Activated CD4-positive, alpha-beta T cell treated with anti-CD3 and anti-CD28 coated beads, Interleukin-2, amount 10 ng/mL, durations not matched to agents 24 days and 14 days (primary cell): ENCODE measurements at regions of chr1 and their contacts with region 1.

Region 1: GRCh38 chr1:52141513-52142219 is at the start of gene ZFYVE9:
- DNase-seq: peak; percentile 92
- H3K4me3 Mint-ChIP-seq: peak within 1 kb of the TSS; percentile 81
- H3K27ac Mint-ChIP-seq: peak within 1 kb of the TSS; percentile 74
- H3K4me1 Mint-ChIP-seq: peaks cover 22% of the 10 kb centered on the region
- H3K27me3 Mint-ChIP-seq: peaks cover 33% of the 10 kb centered on the region
- total RNA-seq, gene ZFYVE9: 3.9 and 4.3 TPM in 2 replicates

Region 2: GRCh38 chr1:51946300-51946699 is 195.4 kb before region 1 on chr1:
- intact Hi-C with region 1: no loop called
- DNase-seq: no peak
- H3K4me3 Mint-ChIP-seq: no peak overlapping the region
- H3K27ac Mint-ChIP-seq: no peak overlapping the region
- H3K4me1 Mint-ChIP-seq: no peaks in the 10 kb centered on the region
- H3K27me3 Mint-ChIP-seq: peaks cover 5% of the 10 kb centered on the region

Region 3: DNA sequence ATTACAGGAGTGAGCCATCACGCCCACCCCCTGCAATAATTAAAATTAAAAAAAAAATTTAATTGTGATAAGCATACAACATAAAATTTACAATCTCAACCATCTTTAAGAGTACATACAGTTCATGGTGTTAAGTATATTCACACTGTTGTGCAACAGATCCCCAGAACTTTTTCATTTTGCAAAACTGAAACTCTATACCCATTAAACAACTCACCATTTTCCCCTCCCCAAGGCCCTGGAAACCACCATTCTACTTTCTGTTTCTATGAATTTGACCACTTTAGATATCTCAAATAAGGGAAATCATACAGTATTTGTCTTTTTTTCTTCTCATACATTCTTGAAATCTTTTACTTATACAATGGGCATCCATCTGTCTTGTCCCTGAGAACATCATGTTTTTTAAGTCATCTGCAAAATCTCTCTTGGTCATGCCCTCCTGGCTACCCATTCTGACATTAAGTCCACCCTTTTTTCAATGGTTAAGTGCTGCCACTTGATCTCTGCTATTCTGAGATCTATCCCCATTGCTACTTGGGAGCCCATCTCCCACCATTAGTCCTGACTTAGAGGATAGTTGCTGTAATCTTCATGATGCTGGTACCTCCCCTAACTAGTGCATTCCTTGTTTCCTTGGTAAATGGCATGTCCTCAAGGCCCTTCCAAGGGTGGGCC is 39.2 kb before region 1 on chr1:
- intact Hi-C with region 1: loop called (anchors 1 kb)
- DNase-seq: no peak
- H3K4me3 Mint-ChIP-seq: no peak overlapping the region
- H3K27ac Mint-ChIP-seq: no peak overlapping the region
- H3K4me1 Mint-ChIP-seq: peaks cover 9% of the 10 kb centered on the region
- H3K27me3 Mint-ChIP-seq: peaks cover 3% of the 10 kb centered on the region

Region 4: GRCh38 chr1:52296345-52296744 is 154.7 kb after region 1 on chr1:
- intact Hi-C with region 1: loop called (anchors 5 kb)
- DNase-seq: peak; percentile 60
- H3K4me3 Mint-ChIP-seq: no peak overlapping the region
- H3K27ac Mint-ChIP-seq: no peak overlapping the region
- H3K4me1 Mint-ChIP-seq: no peaks in the 10 kb centered on the region
- H3K27me3 Mint-ChIP-seq: peaks cover 2% of the 10 kb centered on the region

Region 5: GRCh38 chr1:52365746-52366516 is 224.3 kb after region 1 on chr1 and contains the start of gene CC2D1B:
- intact Hi-C with region 1: loop called (anchors 5 kb)
- DNase-seq: peak; percentile 100
- H3K4me3 Mint-ChIP-seq: peak within 1 kb of the TSS; percentile 97
- H3K27ac Mint-ChIP-seq: peak within 1 kb of the TSS; percentile 92
- H3K4me1 Mint-ChIP-seq: peaks cover 39% of the 10 kb centered on the region
- H3K27me3 Mint-ChIP-seq: no peaks in the 10 kb centered on the region
- total RNA-seq, gene CC2D1B: 34.8 and 36.7 TPM in 2 replicates

Region 6: DNA sequence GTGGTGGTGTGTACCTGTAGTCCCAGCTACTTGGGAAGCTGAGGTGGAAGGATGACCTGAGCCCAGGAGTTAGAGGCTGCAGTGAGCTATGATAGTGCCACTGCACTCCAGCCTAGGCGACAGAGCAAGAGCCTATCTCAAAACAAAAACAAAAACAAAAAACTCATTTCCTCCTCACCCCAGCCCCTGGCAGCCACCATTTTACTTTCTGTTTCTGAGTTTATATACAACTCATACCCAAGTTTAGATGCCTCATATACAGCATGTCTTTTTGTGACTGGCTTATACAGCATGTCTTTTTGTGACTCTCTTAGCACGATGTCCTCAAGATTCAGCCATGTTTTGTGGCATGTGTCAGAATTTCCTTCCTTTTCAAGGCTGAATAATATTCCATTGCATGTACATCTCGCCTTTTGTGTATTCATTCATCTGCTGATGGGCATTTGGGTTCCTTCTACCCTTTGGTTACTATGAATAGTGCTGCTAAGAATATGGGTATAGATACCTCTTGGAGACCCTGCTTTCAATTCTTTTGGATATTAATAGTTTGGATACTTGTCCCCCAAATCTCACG is 541.8 kb after region 1 on chr1:
- intact Hi-C with region 1: loop called (anchors 5 kb)
- DNase-seq: peak; percentile 64
- H3K4me3 Mint-ChIP-seq: no peak overlapping the region
- H3K27ac Mint-ChIP-seq: no peak overlapping the region
- H3K4me1 Mint-ChIP-seq: peaks cover 8% of the 10 kb centered on the region
- H3K27me3 Mint-ChIP-seq: no peaks in the 10 kb centered on the region